ENCODE measurements at regions of chr2 and their contacts with region 1.

Region 1: DNA sequence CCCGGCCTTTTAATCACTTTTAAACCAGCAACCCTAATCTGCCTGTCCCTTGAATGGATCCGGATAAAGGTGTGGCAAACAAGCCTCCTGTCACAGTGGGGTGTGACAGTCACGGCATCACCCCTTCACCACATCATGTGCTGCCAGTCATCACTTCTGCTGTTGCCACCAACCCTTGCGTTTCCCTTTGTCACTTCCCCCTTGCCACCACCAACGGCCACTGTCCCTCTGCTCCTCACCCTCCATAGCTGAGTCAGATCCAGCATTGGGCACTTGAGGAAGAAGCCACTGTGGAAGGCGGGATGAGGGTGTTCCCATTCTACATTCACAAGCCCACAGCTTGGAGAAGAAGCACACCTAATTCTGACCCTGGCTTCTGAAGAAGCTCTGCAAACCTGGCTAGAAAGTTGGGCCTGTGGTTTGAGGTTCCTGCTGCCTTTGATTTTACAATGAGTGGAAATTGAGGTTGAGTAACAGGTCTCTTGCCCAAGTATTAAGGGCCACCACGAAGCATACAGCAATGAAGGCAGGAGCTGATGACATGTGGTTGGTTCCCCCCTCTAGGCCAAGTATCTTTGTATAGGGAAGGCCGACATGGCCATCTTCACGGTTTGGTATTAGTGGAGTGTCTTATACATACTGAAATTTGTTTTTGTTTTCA is 22.9 kb upstream of the DARS1 start:
- DNase-seq: no peak
- ATAC-seq: peak; percentile 69
- H3K4me3 ChIP-seq: no peak overlapping the region
- H3K27ac ChIP-seq: no peak overlapping the region
- H3K4me1 ChIP-seq: peaks cover 9% of the 10 kb centered on the region
- H3K27me3 ChIP-seq: no peaks in the 10 kb centered on the region
- CTCF ChIP-seq: no peak
- EP300 ChIP-seq: peak in 1 of 2 experiments; percentile 33; a peak in 1 of 4 replicates
- POLR2A ChIP-seq: no peak
- RAD21 ChIP-seq: no peak

Region 2: GRCh38 chr2:135617501-135618015 is 390.8 kb before region 1 on chr2:
- CTCF ChIA-PET with region 1: no interaction called
- POLR2A ChIA-PET with region 1: no interaction called
- RAD21 ChIA-PET with region 1: no interaction called
- SMC1A ChIA-PET with region 1: no interaction called
- in situ Hi-C with region 1: no loop called
- intact Hi-C with region 1: no loop called
- DNase-seq: no peak
- ATAC-seq: no peak
- H3K4me3 ChIP-seq: no peak overlapping the region
- H3K27ac ChIP-seq: no peak overlapping the region
- H3K4me1 ChIP-seq: peaks cover 14% of the 10 kb centered on the region
- H3K27me3 ChIP-seq: no peaks in the 10 kb centered on the region
- CTCF ChIP-seq: no peak
- EP300 ChIP-seq: no peak
- POLR2A ChIP-seq: no peak
- RAD21 ChIP-seq: no peak

Region 3: GRCh38 chr2:135839713-135840112 is 168.6 kb before region 1 on chr2:
- CTCF ChIA-PET with region 1: no interaction called
- POLR2A ChIA-PET with region 1: no interaction called
- RAD21 ChIA-PET with region 1: no interaction called
- SMC1A ChIA-PET with region 1: no interaction called
- in situ Hi-C with region 1: no loop called
- intact Hi-C with region 1: no loop called
- DNase-seq: no peak
- ATAC-seq: no peak
- H3K4me3 ChIP-seq: no peak overlapping the region
- H3K27ac ChIP-seq: no peak overlapping the region
- H3K4me1 ChIP-seq: no peaks in the 10 kb centered on the region
- H3K27me3 ChIP-seq: no peaks in the 10 kb centered on the region
- CTCF ChIP-seq: no peak
- EP300 ChIP-seq: no peak
- POLR2A ChIP-seq: no peak
- RAD21 ChIP-seq: no peak

Region 4: GRCh38 chr2:136019306-136019705 is 11.0 kb after region 1 on chr2:
- CTCF ChIA-PET with region 1: interaction called, 14 read pairs
- POLR2A ChIA-PET with region 1: interaction called, 20 read pairs
- RAD21 ChIA-PET with region 1: interaction called, 27 read pairs
- SMC1A ChIA-PET with region 1: interaction called, 152 read pairs
- in situ Hi-C with region 1: no loop called
- intact Hi-C with region 1: no loop called
- DNase-seq: peak; percentile 40
- ATAC-seq: peak; percentile 78
- H3K4me3 ChIP-seq: no peak overlapping the region
- H3K27ac ChIP-seq: no peak overlapping the region
- H3K4me1 ChIP-seq: peaks cover 8% of the 10 kb centered on the region
- H3K27me3 ChIP-seq: no peaks in the 10 kb centered on the region
- CTCF ChIP-seq: no peak
- EP300 ChIP-seq: peak; percentile 78 to 87; a peak in 2 of 4 replicates
- POLR2A ChIP-seq: no peak
- RAD21 ChIP-seq: 0 out of 2 replicates have a peak, but pooled peaks have one; percentile 6

Region 5: DNA sequence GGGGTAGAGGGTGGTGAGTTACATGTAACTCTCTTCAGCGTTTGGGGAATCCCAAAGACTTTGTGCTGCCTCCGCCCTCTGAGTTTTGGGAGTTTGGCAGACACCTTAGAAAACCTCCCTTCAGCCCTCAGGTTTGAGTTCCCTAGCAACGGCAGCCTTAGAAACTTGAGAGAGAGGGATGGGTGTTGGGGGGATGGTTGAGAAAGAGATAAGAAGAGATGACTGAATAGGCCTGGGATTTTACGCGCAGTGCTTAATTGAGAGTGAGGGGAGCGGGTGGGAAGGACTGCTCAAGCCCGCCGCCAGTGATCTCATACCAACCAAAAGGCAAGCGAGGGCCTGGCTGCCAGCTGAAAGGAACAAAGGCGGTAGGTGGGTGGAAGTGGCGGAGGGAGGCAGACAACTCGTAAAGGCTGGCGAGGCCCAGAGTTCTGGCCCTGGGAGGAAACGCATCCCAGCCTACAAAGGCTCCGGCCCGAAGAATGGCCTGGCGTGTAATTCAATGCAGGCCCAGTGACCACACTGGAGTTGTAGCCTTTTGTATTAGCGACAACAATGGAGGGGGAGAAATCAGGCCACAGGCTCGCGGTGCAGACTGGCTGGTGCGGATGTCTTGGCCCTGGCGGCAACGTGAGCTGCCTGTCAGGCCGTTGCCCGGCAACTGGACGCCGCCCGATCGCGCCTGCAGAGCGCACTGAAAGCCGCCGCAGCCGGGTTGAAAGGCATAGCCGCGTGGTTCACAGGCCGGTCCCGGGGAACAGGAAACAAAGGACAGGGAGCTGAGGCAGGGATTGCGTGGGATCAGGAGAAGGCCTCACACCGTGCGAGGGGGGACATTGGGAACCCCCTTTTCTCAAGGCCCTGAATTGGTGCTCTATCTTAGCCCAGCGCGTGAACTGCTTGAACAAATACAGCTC is 17.0 kb after region 1 on chr2:
- CTCF ChIA-PET with region 1: interaction called, 29 read pairs
- POLR2A ChIA-PET with region 1: interaction called, 6 read pairs
- RAD21 ChIA-PET with region 1: interaction called, 50 read pairs
- SMC1A ChIA-PET with region 1: interaction called, 152 read pairs
- in situ Hi-C with region 1: no loop called
- intact Hi-C with region 1: no loop called
- DNase-seq: no peak
- ATAC-seq: peak; percentile 68
- H3K4me3 ChIP-seq: no peak overlapping the region
- H3K27ac ChIP-seq: no peak overlapping the region
- H3K4me1 ChIP-seq: peaks cover 7% of the 10 kb centered on the region; the same call in 1 of the 2 replicates
- H3K27me3 ChIP-seq: no peaks in the 10 kb centered on the region
- CTCF ChIP-seq: no peak
- EP300 ChIP-seq: no peak
- POLR2A ChIP-seq: no peak
- RAD21 ChIP-seq: no peak

Measured in GM12878 (cell line).